ENCODE measurements at regions of chr10 and their contacts with region 1.

Region 1: GRCh38 chr10:126924915-126925300 is 19.7 kb downstream of the DOCK1 start:
- DNase-seq: peak; percentile 90
- H3K4me3 ChIP-seq: no peak overlapping the region
- H3K27ac ChIP-seq: peak overlapping the region; percentile 84
- H3K4me1 ChIP-seq: peaks cover 24% of the 10 kb centered on the region
- H3K27me3 ChIP-seq: no peaks in the 10 kb centered on the region
- CTCF ChIP-seq: no peak

Region 2: GRCh38 chr10:126857178-126857806 is 67.6 kb before region 1 on chr10:
- CTCF ChIA-PET with region 1: no interaction called
- dilution Hi-C with region 1: no loop called
- in situ Hi-C with region 1: no loop called
- intact Hi-C with region 1: no loop called
- DNase-seq: no peak
- H3K4me3 ChIP-seq: no peak overlapping the region
- H3K27ac ChIP-seq: no peak overlapping the region
- H3K4me1 ChIP-seq: no peaks in the 10 kb centered on the region
- H3K27me3 ChIP-seq: no peaks in the 10 kb centered on the region
- CTCF ChIP-seq: peak in 1 of 2 donors; percentile 22

Region 3: DNA sequence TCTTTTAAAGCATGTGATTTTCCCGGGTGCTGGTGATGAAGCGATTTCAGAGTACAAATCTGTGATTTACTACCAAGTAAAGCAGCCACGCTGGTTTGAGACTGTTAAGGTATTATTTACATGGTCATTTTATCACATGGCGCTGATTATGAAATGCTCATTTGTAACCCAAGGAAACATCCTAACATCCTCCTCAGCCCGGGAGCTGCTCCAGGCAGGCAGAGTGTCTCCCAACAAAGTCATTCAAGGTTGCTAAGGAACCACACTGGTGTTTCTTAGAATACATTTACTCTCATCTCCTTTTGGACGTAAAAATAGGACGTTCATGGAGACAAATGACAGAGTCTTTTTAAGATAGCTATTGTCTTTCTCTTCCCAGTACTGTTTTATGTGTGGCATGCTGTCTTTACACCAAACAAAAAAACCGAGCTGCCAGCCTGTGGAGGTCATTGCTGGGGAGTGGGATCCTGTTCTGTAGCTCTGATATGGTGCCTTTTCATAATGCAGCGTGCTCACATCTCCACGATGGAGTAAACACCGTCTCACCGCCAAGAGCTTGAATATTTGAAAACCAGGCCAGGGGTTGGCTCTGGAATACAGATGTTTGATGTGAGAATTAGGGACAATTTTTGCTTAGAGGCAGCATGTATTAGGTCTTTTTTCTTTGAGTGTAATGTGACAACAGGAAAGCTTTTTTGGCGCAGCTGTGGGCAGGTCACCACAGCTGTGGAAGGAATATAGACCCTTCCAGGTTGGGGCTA is 99.9 kb after region 1 on chr10:
- CTCF ChIA-PET with region 1: no interaction called
- dilution Hi-C with region 1: loop called (anchors 5 kb)
- in situ Hi-C with region 1: no loop called
- intact Hi-C with region 1: no loop called
- DNase-seq: no peak
- H3K4me3 ChIP-seq: no peak overlapping the region
- H3K27ac ChIP-seq: no peak overlapping the region
- H3K4me1 ChIP-seq: no peaks in the 10 kb centered on the region
- H3K27me3 ChIP-seq: no peaks in the 10 kb centered on the region
- CTCF ChIP-seq: no peak

Measured in mammary epithelial cell (primary cell).